Psoas muscle (tissue), 8 donors: ENCODE measurements at regions of chr14 and their contacts with region 1.

Region 1: GRCh38 chr14:22872033-22872832 is 693 bp downstream of the LRP10 start:
- DNase-seq: peak; percentile 78 to 86
- ATAC-seq: peak; percentile 63 to 75 (median 70)
- H3K4me3 ChIP-seq: peak overlapping the region; percentile 100
- H3K27ac ChIP-seq: peak overlapping the region; percentile 100
- H3K4me1 ChIP-seq: peaks cover 16% of the 10 kb centered on the region
- H3K27me3 ChIP-seq: no peaks in the 10 kb centered on the region
- CTCF ChIP-seq: peak; percentile 86

Region 2: GRCh38 chr14:22900081-22900799 is 28.0 kb after region 1 on chr14:
- intact Hi-C with region 1: loop called in 1 of 2 experiments (anchors 2 kb)
- DNase-seq: no peak
- ATAC-seq: peak; percentile 58 to 79 (median 65)
- H3K4me3 ChIP-seq: no peak overlapping the region
- H3K27ac ChIP-seq: no peak overlapping the region
- H3K4me1 ChIP-seq: no peaks in the 10 kb centered on the region
- H3K27me3 ChIP-seq: no peaks in the 10 kb centered on the region
- CTCF ChIP-seq: peak; percentile 46

Region 3: DNA sequence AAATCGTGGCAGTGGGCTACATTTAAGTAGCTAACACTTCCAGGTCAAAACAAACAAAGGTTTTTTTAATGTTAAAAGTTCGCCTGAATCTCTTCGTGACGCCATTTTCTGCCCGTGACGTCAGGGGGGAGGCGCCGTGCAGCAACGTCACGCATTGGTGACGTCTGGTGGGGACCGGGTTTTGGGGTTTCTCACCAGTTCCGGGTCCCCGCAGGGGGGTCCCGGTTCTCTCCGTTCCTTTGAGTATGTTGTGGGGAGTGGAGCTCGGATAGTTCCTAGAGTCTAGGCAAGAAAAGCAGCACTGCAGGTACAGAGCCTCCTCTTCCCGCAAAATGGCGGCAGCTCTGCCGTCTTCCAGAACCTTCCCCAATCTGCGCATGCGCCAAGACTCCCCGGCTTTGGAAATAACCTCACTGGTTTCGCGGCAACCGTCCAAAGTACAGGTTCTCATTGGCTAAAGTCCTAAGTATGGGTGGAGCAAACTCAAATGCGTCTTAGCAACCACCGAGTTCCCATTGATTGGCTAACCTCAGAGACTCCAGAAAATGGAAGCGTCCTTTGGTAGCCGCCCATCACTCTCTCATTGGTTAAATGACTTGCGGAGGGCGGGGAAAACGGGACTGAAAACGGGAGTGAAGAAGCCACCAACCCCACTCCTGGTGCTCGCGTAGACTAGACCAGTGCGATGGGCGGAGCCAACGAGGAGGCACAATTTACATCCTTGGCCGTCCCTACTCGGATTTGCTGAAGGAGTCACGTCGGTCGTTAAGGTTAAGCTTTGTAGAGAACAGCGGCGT is 46.8 kb after region 1 on chr14 and contains the start of gene RBM23:
- intact Hi-C with region 1: loop called in 1 of 2 experiments (anchors 5 kb)
- DNase-seq: peak; percentile 100
- ATAC-seq: peak; percentile 92 to 94 (median 94)
- H3K4me3 ChIP-seq: peak within 1 kb of the TSS; percentile 98
- H3K27ac ChIP-seq: peak within 1 kb of the TSS; percentile 98
- H3K4me1 ChIP-seq: peaks cover 15% of the 10 kb centered on the region
- H3K27me3 ChIP-seq: no peaks in the 10 kb centered on the region
- CTCF ChIP-seq: no peak
- total RNA-seq, gene RBM23: 25.4 to 42.1 (median 27.8) TPM

Region 4: DNA sequence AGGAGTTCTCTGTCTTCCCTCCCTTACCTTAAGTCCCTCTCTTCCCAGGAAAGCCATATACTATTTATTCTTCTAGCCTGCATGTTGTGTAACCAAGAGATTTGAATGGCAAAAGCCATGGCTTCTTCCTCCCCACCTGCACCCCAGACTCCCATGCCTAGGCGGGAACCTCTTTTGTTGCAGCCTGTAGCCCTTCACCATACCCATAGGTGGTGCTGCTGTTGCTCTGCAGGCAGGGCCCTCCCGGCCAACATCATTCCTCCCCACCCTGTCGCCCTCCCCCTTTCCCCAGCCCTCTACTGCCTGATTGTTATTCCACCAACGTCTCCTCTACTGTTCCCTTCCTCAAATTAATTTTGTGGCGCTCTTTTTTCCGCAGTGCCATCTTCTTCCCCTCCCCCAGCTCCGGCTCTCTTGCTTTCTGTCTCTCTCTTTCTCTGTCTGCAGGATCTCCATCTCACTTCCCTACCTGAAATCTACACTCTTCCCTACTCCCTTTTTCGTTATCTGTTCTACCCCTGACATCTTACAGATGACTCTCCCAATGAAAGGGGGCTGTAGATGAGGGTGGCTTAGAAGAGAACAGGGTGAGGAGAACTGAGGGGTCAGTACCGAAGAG is 611.1 kb after region 1 on chr14:
- intact Hi-C with region 1: no loop called
- DNase-seq: no peak
- ATAC-seq: no peak
- H3K4me3 ChIP-seq: no peak overlapping the region
- H3K27ac ChIP-seq: no peak overlapping the region
- H3K4me1 ChIP-seq: no peaks in the 10 kb centered on the region
- H3K27me3 ChIP-seq: no peaks in the 10 kb centered on the region
- CTCF ChIP-seq: no peak